Activated CD4-positive, alpha-beta memory T cell treated with anti-CD3 and anti-CD28 coated beads, Interleukin-2, amount 10 ng/mL, durations not matched to agents 7 days and 5 days (primary cell): ENCODE measurements at regions of chr15 and their contacts with region 1.

Region 1: DNA sequence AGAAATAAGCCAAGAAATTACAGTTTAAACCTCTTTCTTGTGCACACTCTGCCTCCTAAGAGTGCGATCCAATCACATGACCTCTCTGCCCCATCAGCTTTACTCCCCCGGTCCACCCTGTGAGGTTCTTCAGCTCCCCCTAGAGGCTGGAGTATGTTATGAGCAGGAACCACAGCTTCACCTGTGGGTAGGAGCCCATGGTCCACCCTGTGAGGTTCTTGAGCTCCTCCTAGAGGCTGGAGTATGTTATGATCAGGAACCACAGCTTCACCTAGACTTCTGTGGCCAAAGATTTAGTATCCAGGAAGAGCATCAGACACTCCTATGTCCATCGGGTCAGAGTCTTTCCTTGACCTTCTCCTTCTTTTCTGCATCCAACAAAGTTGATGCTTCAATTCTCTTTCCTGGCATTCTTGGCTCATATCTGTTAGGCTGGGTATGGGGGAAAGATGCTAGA is 163.9 kb downstream of the MINAR1 start:
- DNase-seq: peak; percentile 69
- H3K4me3 Mint-ChIP-seq: no peak overlapping the region
- H3K27ac Mint-ChIP-seq: no peak overlapping the region
- H3K4me1 Mint-ChIP-seq: no peaks in the 10 kb centered on the region
- H3K27me3 Mint-ChIP-seq: peaks cover 9% of the 10 kb centered on the region

Region 2: DNA sequence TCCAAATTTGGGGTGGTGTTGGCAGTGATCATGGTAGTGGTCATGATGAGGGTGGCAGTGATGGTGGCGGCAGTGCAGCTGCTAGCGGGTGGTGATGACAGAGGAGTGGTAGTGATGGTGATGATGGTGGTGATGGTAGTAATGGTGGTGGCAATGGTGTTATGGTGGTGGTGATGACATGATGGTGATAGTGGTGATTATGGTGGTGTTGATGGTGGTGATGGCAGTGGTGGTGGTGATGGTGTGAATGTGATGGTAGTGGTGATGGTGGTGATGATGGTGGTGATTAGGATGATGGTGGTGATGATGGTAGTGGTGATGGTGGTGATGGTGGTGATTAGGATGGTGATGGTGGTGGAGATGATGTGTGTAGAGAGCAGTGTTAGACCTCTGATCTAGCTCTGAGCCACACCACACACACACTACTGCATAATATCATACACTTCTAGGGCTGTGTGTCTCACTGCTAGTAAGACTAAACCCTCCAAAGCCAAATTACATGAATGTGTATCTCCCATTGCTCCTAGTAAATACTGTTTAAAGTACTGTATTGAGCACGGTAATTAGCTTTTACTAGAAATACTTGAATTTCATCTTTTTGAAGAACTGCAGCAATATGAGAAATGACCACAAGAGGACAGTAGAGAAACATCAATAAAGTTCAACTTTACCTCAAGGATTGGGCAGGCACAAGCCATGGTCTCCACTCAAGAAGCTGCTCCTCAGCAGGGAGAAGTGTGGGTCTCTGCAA is 256.3 kb before region 1 on chr15:
- CTCF ChIA-PET with region 1: interaction called, 21 read pairs
- POLR2A ChIA-PET with region 1: no interaction called
- DNase-seq: no peak
- H3K4me3 Mint-ChIP-seq: no peak overlapping the region
- H3K27ac Mint-ChIP-seq: no peak overlapping the region
- H3K4me1 Mint-ChIP-seq: no peaks in the 10 kb centered on the region
- H3K27me3 Mint-ChIP-seq: no peaks in the 10 kb centered on the region

Region 3: DNA sequence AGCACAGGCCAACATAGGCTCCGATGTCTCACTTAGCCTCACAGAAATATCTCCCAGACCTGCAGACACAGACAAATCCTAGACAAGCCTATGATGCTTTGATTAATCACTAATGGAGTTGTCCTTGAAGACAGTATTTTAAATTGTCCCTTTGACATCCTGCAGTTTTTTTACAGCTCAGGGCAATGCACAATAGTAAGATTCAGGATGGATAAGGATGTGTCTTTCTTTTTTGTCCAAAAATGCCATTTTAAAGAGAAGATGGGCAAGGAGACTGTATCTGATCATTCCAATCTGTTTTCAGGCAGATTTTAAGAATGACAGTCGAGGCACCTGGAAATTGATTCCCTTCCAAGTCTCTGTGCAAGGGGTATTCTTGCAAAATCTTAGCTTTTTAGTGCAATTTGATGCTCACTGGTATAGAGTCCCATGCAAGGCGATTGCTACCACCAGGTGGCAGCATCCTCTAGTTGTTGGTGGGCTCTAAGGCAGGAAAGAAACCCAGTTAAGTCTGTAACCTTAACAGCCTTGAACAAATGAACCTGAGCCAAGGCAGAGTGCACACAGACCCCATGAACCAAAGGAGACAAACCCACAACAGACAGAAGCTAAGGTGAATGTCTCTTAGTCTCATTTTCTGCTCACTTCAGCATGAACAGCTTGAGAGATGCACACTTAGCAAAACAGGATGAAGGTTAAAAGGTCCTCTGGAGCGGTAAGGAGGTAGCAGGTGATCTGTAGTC is 215.2 kb before region 1 on chr15:
- CTCF ChIA-PET with region 1: interaction called, 96 read pairs
- POLR2A ChIA-PET with region 1: no interaction called
- DNase-seq: peak; percentile 76
- H3K4me3 Mint-ChIP-seq: no peak overlapping the region
- H3K27ac Mint-ChIP-seq: no peak overlapping the region
- H3K4me1 Mint-ChIP-seq: peaks cover 3% of the 10 kb centered on the region
- H3K27me3 Mint-ChIP-seq: no peaks in the 10 kb centered on the region

Region 4: DNA sequence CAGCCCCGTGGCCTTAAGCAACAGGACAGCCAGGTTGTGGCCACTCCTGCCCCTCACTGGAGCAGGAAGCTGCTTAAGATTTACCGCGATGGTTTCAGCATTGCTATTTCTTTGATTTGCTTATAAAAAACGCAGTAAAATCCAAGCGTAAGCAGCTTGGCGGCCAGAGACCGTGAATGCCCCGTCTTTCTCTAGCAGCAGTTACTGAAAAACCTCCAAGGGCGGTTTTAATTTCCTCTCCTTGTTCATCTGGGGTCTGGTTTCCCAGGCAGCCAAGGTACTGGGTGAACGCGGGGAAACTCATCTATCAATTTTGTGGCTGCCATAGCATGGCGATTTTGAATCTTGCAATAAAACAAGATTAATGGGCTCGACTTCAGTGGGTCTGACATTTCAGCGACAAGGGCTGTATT is 33.7 kb before region 1 on chr15:
- CTCF ChIA-PET with region 1: interaction called, 13 read pairs
- POLR2A ChIA-PET with region 1: no interaction called
- DNase-seq: no peak
- H3K4me3 Mint-ChIP-seq: no peak overlapping the region
- H3K27ac Mint-ChIP-seq: no peak overlapping the region
- H3K4me1 Mint-ChIP-seq: no peaks in the 10 kb centered on the region
- H3K27me3 Mint-ChIP-seq: peaks cover 3% of the 10 kb centered on the region

Region 5: GRCh38 chr15:79582650-79583049 is 13.4 kb before region 1 on chr15:
- CTCF ChIA-PET with region 1: interaction called, 21 read pairs
- POLR2A ChIA-PET with region 1: no interaction called
- DNase-seq: no peak
- H3K4me3 Mint-ChIP-seq: no peak overlapping the region
- H3K27ac Mint-ChIP-seq: no peak overlapping the region
- H3K4me1 Mint-ChIP-seq: no peaks in the 10 kb centered on the region
- H3K27me3 Mint-ChIP-seq: peaks cover 39% of the 10 kb centered on the region